CD8-positive, alpha-beta T cell (primary cell): ENCODE measurements at regions of chr3 and their contacts with region 1.

Region 1: GRCh38 chr3:149120051-149120972 is 9.1 kb upstream of the HPS3 start:
- DNase-seq: peak in 3 of 9 experiments; percentile 15 to 81 (median 72)
- ATAC-seq: peak; percentile 81
- H3K4me3 ChIP-seq: no peak overlapping the region
- H3K4me3 Mint-ChIP-seq: no peak overlapping the region
- H3K27ac ChIP-seq: no peak overlapping the region
- H3K27ac Mint-ChIP-seq: no peak overlapping the region
- H3K4me1 ChIP-seq: no peaks in the 10 kb centered on the region
- H3K4me1 Mint-ChIP-seq: no peaks in the 10 kb centered on the region
- H3K27me3 ChIP-seq: no peaks in the 10 kb centered on the region
- H3K27me3 Mint-ChIP-seq: peaks cover 7% of the 10 kb centered on the region
- CTCF ChIP-seq: peak; percentile 71

Region 2: DNA sequence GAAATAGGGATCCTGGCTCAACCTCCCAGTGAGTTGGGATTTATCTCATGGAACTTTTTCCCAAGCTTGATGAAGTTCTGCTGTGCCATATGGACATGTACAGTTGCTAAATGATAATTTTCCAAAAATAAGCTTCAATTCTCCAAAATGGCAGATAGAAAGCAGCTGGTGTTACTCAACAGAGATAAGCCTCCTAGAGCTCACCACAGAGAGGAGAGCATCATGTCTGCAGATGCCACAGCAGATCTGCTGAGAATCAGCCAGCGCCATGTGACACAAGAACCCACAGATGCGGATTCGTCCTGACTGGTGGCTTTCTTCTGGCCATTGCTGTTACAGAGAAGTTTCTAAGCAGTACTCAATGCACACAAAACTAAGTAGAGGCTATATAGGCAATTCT is 372.0 kb before region 1 on chr3:
- CTCF ChIA-PET with region 1: no interaction called
- POLR2A ChIA-PET with region 1: no interaction called
- intact Hi-C with region 1: no loop called
- DNase-seq: no peak
- ATAC-seq: no peak
- H3K4me3 ChIP-seq: no peak overlapping the region
- H3K4me3 Mint-ChIP-seq: no peak overlapping the region
- H3K27ac ChIP-seq: no peak overlapping the region
- H3K27ac Mint-ChIP-seq: no peak overlapping the region
- H3K4me1 ChIP-seq: no peaks in the 10 kb centered on the region
- H3K4me1 Mint-ChIP-seq: no peaks in the 10 kb centered on the region
- H3K27me3 ChIP-seq: no peaks in the 10 kb centered on the region
- H3K27me3 Mint-ChIP-seq: no peaks in the 10 kb centered on the region
- CTCF ChIP-seq: no peak

Region 3: GRCh38 chr3:148955544-148956346 is 164.6 kb before region 1 on chr3:
- CTCF ChIA-PET with region 1: interaction called, 31 read pairs
- POLR2A ChIA-PET with region 1: no interaction called
- intact Hi-C with region 1: loop called (anchors 2 kb)
- DNase-seq: peak in 2 of 9 experiments; percentile 62 to 66
- ATAC-seq: no peak
- H3K4me3 ChIP-seq: no peak overlapping the region
- H3K4me3 Mint-ChIP-seq: no peak overlapping the region
- H3K27ac ChIP-seq: no peak overlapping the region
- H3K27ac Mint-ChIP-seq: no peak overlapping the region
- H3K4me1 ChIP-seq: no peaks in the 10 kb centered on the region
- H3K4me1 Mint-ChIP-seq: no peaks in the 10 kb centered on the region
- H3K27me3 ChIP-seq: no peaks in the 10 kb centered on the region
- H3K27me3 Mint-ChIP-seq: peaks cover 2% of the 10 kb centered on the region
- CTCF ChIP-seq: peak; percentile 48

Region 4: DNA sequence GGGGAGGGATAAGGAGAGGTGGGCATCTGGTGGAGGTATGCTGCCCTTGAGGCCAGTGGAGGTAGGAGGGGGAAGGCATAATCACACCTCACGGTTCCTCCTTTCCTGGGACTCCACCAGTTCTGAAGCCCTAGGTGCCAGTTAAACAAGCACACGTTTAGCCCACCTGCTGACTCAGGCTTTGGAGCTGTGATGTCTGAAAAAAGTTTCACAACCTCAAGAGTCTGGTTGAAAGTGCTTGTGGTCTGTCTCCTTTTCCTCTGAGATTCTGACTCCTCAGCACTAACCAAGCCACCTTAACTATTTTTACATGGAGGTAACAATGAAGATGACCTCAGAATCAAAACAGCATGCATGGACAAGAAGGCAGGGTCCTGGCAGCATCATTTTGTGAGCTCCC is 32.1 kb after region 1 on chr3:
- CTCF ChIA-PET with region 1: interaction called, 3 read pairs
- POLR2A ChIA-PET with region 1: no interaction called
- intact Hi-C with region 1: loop called in 1 of 2 experiments (anchors 5 kb)
- DNase-seq: peak in 2 of 9 experiments; percentile 34 to 50
- ATAC-seq: peak; percentile 29
- H3K4me3 ChIP-seq: no peak overlapping the region
- H3K4me3 Mint-ChIP-seq: no peak overlapping the region
- H3K27ac ChIP-seq: peak overlapping the region in 1 of 2 experiments; percentile 30
- H3K27ac Mint-ChIP-seq: no peak overlapping the region
- H3K4me1 ChIP-seq: peaks cover 4% of the 10 kb centered on the region
- H3K4me1 Mint-ChIP-seq: peaks cover 14% of the 10 kb centered on the region
- H3K27me3 ChIP-seq: no peaks in the 10 kb centered on the region
- H3K27me3 Mint-ChIP-seq: no peaks in the 10 kb centered on the region
- CTCF ChIP-seq: no peak

Region 5: DNA sequence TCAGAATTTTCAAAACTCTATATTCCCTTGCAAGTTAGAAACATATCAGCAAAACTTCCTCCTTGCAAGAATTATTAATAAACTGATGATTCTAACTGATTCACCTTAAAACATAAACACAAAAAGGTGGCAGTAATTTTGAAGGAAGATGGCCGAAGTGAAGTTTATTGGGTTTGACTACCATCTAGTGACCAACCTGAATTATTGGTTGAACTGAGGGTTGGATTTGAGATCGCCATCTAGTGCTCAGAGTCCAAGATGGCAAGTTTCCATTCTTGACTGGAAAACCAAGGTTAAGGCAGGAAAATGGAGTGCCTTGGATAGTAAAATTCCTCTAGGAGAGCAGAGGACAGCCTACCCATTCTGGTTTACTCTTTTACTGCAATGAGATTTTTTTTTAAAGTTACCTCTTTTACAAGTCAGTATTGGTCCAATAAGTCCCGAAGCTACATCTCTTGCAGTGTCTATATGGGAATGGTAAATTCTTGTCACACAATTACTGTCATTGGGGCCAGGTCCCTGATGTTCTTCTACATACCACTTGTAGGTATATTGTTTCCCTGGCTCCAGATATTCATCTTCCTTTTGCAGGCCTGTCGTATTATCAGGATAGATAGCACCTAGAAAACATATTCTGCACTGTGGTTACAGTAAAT is 152.9 kb after region 1 on chr3:
- CTCF ChIA-PET with region 1: interaction called, 125 read pairs
- POLR2A ChIA-PET with region 1: interaction called, 4 read pairs
- intact Hi-C with region 1: loop called (anchors 1 kb)
- DNase-seq: peak in 3 of 9 experiments; percentile 22 to 85 (median 76)
- ATAC-seq: peak; percentile 86
- H3K4me3 ChIP-seq: no peak overlapping the region
- H3K4me3 Mint-ChIP-seq: no peak overlapping the region
- H3K27ac ChIP-seq: no peak overlapping the region
- H3K27ac Mint-ChIP-seq: no peak overlapping the region
- H3K4me1 ChIP-seq: peaks cover 13% of the 10 kb centered on the region
- H3K4me1 Mint-ChIP-seq: peaks cover 12% of the 10 kb centered on the region
- H3K27me3 ChIP-seq: no peaks in the 10 kb centered on the region
- H3K27me3 Mint-ChIP-seq: no peaks in the 10 kb centered on the region
- CTCF ChIP-seq: peak; percentile 89

Region 6: DNA sequence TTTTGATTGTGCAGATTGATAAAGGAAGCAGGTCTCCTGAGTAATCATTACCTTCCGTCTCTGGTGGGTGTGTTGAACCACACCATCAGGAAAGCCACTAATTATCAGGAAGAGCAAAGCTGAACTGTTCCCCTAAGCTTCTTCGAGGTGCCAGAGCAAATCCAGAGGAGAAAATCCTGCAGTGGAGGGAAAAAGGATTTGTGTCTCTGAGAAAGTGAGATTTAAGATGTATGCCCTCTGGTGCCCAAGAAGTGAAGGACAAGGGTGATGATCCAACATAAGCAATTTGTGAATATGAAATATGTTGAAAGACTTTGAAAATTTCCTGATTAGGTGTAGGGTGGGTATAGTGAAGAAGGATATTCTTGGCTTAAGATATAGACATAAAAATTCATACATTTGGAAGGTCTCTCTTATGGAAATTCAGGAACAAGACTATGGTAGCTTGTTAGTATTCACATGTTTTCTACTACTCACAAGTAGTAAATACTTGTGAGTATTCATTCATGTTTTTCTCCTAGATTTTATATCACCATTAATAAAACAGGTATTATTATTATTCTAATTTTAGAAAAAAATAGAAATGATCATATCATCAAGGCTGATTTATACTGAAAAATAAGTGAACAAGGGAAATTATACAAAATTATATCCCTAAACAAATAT is 597.2 kb after region 1 on chr3:
- CTCF ChIA-PET with region 1: interaction called, 3 read pairs
- POLR2A ChIA-PET with region 1: no interaction called
- intact Hi-C with region 1: loop called in 1 of 2 experiments (anchors 2 kb)
- DNase-seq: peak in 3 of 9 experiments; percentile 13 to 52 (median 29)
- ATAC-seq: no peak
- H3K4me3 ChIP-seq: no peak overlapping the region
- H3K4me3 Mint-ChIP-seq: no peak overlapping the region
- H3K27ac ChIP-seq: no peak overlapping the region
- H3K27ac Mint-ChIP-seq: no peak overlapping the region
- H3K4me1 ChIP-seq: no peaks in the 10 kb centered on the region
- H3K4me1 Mint-ChIP-seq: no peaks in the 10 kb centered on the region
- H3K27me3 ChIP-seq: no peaks in the 10 kb centered on the region
- H3K27me3 Mint-ChIP-seq: no peaks in the 10 kb centered on the region
- CTCF ChIP-seq: peak; percentile 57

Region 7: DNA sequence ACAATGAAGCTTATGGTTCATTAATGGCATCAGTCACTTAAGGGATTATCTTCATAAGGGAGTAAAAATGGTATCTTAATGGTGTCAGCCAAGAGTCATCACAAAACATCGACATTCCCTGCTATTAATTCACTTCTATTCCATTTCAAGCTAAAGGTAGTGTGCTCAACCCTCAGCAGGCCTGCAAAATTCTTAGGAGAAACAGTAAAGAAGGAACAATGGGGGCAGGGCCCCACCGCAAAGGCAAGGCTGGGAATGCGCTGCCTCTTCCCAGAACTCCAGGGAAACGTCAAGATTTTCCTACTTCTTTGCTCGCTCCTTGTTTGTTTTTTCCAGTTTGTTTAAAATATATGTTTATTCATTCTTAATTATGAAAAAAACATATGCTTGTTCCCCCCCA is 1100.5 kb after region 1 on chr3:
- CTCF ChIA-PET with region 1: no interaction called
- POLR2A ChIA-PET with region 1: no interaction called
- intact Hi-C with region 1: loop called in 1 of 2 experiments (anchors 5 kb)
- DNase-seq: no peak
- ATAC-seq: no peak
- H3K4me3 ChIP-seq: no peak overlapping the region
- H3K4me3 Mint-ChIP-seq: no peak overlapping the region
- H3K27ac ChIP-seq: no peak overlapping the region
- H3K27ac Mint-ChIP-seq: no peak overlapping the region
- H3K4me1 ChIP-seq: peaks cover 5% of the 10 kb centered on the region
- H3K4me1 Mint-ChIP-seq: peaks cover 6% of the 10 kb centered on the region
- H3K27me3 ChIP-seq: peaks cover 5 to 10% of the 10 kb centered on the region in 2 experiments
- H3K27me3 Mint-ChIP-seq: peaks cover 45% of the 10 kb centered on the region
- CTCF ChIP-seq: no peak